ENCODE measurements at regions of chr3 and their contacts with region 1.

Region 1: GRCh38 chr3:195197765-195198425 is 73.1 kb downstream of the XXYLT1 start:
- DNase-seq: peak in 1 of 10 donors; percentile 17
- H3K4me3 ChIP-seq: no peak overlapping the region
- H3K27ac ChIP-seq: peak overlapping the region in 4 of 59 donors; percentile 10 to 43 (median 26)
- H3K27me3 ChIP-seq: no peaks in the 10 kb centered on the region
- CTCF ChIP-seq: no peak

Region 2: GRCh38 chr3:195133462-195133861 is 64.4 kb before region 1 on chr3:
- intact Hi-C with region 1: loop called in 1 of 2 experiments (anchors 10 kb)
- DNase-seq: peak in 9 of 10 donors; percentile 39 to 85 (median 72)
- H3K4me3 ChIP-seq: no peak overlapping the region
- H3K27ac ChIP-seq: peak overlapping the region in 2 of 59 donors; percentile 13
- H3K27me3 ChIP-seq: no peaks in the 10 kb centered on the region
- CTCF ChIP-seq: peak in 26 of 56 donors; percentile 9 to 65 (median 32)

Region 3: DNA sequence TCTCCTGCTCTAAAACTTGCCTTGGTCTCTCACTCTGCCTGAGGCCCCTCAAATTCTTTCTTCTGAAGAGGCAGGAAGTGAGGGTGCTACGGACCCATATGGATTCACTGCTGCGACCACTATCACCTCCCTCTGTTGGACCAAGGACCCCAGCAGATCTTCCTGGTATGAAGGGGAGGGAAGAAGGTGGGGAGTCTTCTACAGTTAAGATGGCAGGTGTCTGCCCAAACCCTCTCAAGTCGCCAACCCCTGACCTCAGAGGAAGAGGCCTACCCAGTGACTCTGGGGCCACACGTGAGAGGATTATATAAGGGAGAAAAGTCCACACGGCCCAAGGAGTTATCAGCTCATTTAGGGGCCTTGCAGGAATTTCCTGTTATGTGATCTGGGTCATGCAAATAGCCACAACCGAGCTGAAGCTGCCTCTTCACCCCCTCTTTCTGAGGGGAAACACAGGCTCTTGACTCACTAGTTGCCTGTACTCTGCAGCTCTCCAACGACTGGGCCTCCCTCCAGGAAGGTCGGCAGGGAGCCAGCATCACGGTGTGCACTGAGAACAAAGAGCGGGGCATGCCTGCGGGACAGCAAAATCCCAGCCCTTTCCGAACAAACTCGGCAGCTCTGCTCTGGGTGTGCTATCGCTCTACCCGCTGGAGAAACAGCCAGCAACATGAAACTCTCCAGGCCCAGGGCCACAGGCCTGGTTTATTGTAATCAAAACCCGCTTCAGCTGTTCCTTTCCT is 42.9 kb before region 1 on chr3:
- intact Hi-C with region 1: loop called (anchors 2 to 5 kb)
- DNase-seq: peak; percentile 48 to 84 (median 70)
- H3K4me3 ChIP-seq: peak overlapping the region in 33 of 59 donors; percentile 2 to 52 (median 33)
- H3K27ac ChIP-seq: peak overlapping the region in 54 of 59 donors; percentile 28 to 86 (median 74)
- H3K27me3 ChIP-seq: no peaks in the 10 kb centered on the region
- CTCF ChIP-seq: no peak